ENCODE measurements at regions of chr7 and their contacts with region 1.

Region 1: GRCh38 chr7:129054438-129055293 is at the start of gene TNPO3:
- DNase-seq: peak; percentile 94
- ATAC-seq: peak; percentile 81
- H3K4me3 ChIP-seq: peak within 1 kb of the TSS; percentile 72 to 99 (median 92)
- H3K4me3 Mint-ChIP-seq: peak within 1 kb of the TSS; percentile 98
- H3K27ac ChIP-seq: peak within 1 kb of the TSS; percentile 90 to 96
- H3K27ac Mint-ChIP-seq: peak within 1 kb of the TSS; percentile 99
- H3K4me1 ChIP-seq: peaks cover 31 to 33% of the 10 kb centered on the region in 2 donors
- H3K4me1 Mint-ChIP-seq: peaks cover 42% of the 10 kb centered on the region
- H3K27me3 ChIP-seq: no peaks in the 10 kb centered on the region
- H3K27me3 Mint-ChIP-seq: no peaks in the 10 kb centered on the region
- CTCF ChIP-seq: no peak
- total RNA-seq, gene TNPO3: 47.8 and 48.3 TPM in 2 replicates

Region 2: GRCh38 chr7:128963327-128963757 is 91.3 kb before region 1 on chr7:
- CTCF ChIA-PET with region 1: no interaction called
- POLR2A ChIA-PET with region 1: no interaction called
- intact Hi-C with region 1: loop called (anchors 10 kb)
- DNase-seq: peak; percentile 87
- ATAC-seq: peak; percentile 95
- H3K4me3 ChIP-seq: peak overlapping the region in 1 of 5 experiments; percentile 36
- H3K4me3 Mint-ChIP-seq: peak overlapping the region; percentile 74
- H3K27ac ChIP-seq: peak overlapping the region; percentile 80 to 92
- H3K27ac Mint-ChIP-seq: peak overlapping the region; percentile 91
- H3K4me1 ChIP-seq: peaks cover 16% of the 10 kb centered on the region in 2 donors
- H3K4me1 Mint-ChIP-seq: peaks cover 27% of the 10 kb centered on the region
- H3K27me3 ChIP-seq: no peaks in the 10 kb centered on the region
- H3K27me3 Mint-ChIP-seq: no peaks in the 10 kb centered on the region
- CTCF ChIP-seq: no peak

Region 3: DNA sequence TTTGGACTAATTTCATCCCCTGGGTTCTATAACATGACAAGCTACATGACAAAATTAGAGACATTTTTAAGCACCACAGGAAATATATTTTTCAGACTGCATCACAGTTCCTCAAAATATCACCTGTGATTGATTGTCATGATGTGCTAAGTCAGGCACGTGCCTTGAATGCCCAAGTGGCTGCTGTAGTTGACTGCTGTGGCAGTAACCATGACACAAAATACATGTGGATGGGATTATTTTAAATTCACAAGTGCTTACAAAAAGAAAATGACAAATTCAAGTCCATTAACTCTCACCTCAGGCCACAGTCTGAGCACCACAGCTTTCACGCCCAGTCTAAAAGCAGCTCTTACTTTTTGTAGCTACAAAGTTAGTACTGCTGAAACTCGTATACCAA is 45.2 kb before region 1 on chr7:
- CTCF ChIA-PET with region 1: no interaction called
- POLR2A ChIA-PET with region 1: no interaction called
- intact Hi-C with region 1: loop called (anchors 2 kb)
- DNase-seq: peak; percentile 79
- ATAC-seq: peak; percentile 90
- H3K4me3 ChIP-seq: no peak overlapping the region
- H3K4me3 Mint-ChIP-seq: peak overlapping the region; percentile 30
- H3K27ac ChIP-seq: peak overlapping the region; percentile 77 to 92
- H3K27ac Mint-ChIP-seq: peak overlapping the region; percentile 33
- H3K4me1 ChIP-seq: peaks cover 15 to 19% of the 10 kb centered on the region in 2 donors
- H3K4me1 Mint-ChIP-seq: peaks cover 36% of the 10 kb centered on the region
- H3K27me3 ChIP-seq: no peaks in the 10 kb centered on the region
- H3K27me3 Mint-ChIP-seq: no peaks in the 10 kb centered on the region
- CTCF ChIP-seq: no peak

Region 4: DNA sequence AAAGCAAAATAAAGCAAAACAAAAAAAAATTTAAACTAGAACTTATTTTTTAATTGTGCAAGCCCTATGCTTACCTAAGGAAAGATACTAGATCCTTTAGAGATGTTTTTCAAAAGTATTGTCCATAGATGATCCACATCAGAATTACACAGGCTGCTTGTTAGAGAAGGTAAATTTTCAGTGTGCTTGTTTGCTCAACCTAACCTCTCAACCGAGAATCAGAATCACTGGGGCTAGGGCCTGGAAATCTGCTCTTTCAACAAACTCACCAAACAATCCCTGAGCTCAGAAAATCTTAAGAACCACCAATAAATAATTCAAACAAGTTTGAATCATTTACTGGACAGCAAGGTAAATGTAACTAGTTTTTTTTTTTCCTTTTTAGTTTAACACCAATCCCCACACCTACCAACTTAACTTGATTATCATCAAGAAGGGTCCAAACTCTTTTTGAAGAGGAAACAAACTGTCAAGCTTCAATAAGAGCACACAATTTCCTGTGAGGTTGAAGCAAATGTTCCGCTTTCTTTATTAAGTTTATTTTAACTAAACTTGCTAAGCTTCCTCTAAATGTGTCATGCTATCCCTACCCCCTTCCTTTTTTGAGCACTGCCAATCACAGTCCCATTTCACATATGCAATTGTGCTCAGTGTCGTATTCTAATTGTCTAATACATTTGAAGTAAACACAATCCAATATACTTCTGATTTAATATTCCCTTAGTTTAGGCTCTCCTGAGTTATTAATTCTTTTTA is 82.4 kb after region 1 on chr7:
- CTCF ChIA-PET with region 1: interaction called, 4 read pairs
- POLR2A ChIA-PET with region 1: interaction called, 6 read pairs
- intact Hi-C with region 1: loop called (anchors 2 kb)
- DNase-seq: peak; percentile 82
- ATAC-seq: peak; percentile 88
- H3K4me3 ChIP-seq: peak overlapping the region in 4 of 5 experiments; percentile 4 to 62 (median 18)
- H3K4me3 Mint-ChIP-seq: peak overlapping the region; percentile 85
- H3K27ac ChIP-seq: peak overlapping the region; percentile 90 to 93
- H3K27ac Mint-ChIP-seq: peak overlapping the region; percentile 99
- H3K4me1 ChIP-seq: peaks cover 44 to 65% of the 10 kb centered on the region in 2 donors
- H3K4me1 Mint-ChIP-seq: peaks cover 55% of the 10 kb centered on the region
- H3K27me3 ChIP-seq: no peaks in the 10 kb centered on the region
- H3K27me3 Mint-ChIP-seq: no peaks in the 10 kb centered on the region
- CTCF ChIP-seq: no peak

Region 5: GRCh38 chr7:129144095-129144833 is 89.6 kb after region 1 on chr7 and contains the start of gene TSPAN33:
- CTCF ChIA-PET with region 1: interaction called, 4 read pairs
- POLR2A ChIA-PET with region 1: no interaction called
- intact Hi-C with region 1: loop called (anchors 2 kb)
- DNase-seq: peak; percentile 78
- ATAC-seq: peak; percentile 75
- H3K4me3 ChIP-seq: peak within 1 kb of the TSS; percentile 84 to 100 (median 92)
- H3K4me3 Mint-ChIP-seq: peak within 1 kb of the TSS; percentile 99
- H3K27ac ChIP-seq: peak within 1 kb of the TSS; percentile 81 to 97
- H3K27ac Mint-ChIP-seq: peak within 1 kb of the TSS; percentile 99
- H3K4me1 ChIP-seq: peaks cover 44 to 59% of the 10 kb centered on the region in 2 donors
- H3K4me1 Mint-ChIP-seq: peaks cover 59% of the 10 kb centered on the region
- H3K27me3 ChIP-seq: no peaks in the 10 kb centered on the region
- H3K27me3 Mint-ChIP-seq: no peaks in the 10 kb centered on the region
- CTCF ChIP-seq: no peak
- total RNA-seq, gene TSPAN33: 111 and 117 TPM in 2 replicates

Region 6: GRCh38 chr7:129202058-129202777 is 147.6 kb after region 1 on chr7:
- CTCF ChIA-PET with region 1: no interaction called
- POLR2A ChIA-PET with region 1: no interaction called
- intact Hi-C with region 1: no loop called
- DNase-seq: no peak
- ATAC-seq: no peak
- H3K4me3 ChIP-seq: no peak overlapping the region
- H3K4me3 Mint-ChIP-seq: no peak overlapping the region
- H3K27ac ChIP-seq: no peak overlapping the region
- H3K27ac Mint-ChIP-seq: no peak overlapping the region
- H3K4me1 ChIP-seq: peaks cover 0 to 3% of the 10 kb centered on the region in 2 donors
- H3K4me1 Mint-ChIP-seq: peaks cover 8% of the 10 kb centered on the region
- H3K27me3 ChIP-seq: no peaks in the 10 kb centered on the region
- H3K27me3 Mint-ChIP-seq: no peaks in the 10 kb centered on the region
- CTCF ChIP-seq: no peak

Measured in B cell (primary cell).